ENCODE measurements at regions of chr16 and their contacts with region 1.

Region 1: DNA sequence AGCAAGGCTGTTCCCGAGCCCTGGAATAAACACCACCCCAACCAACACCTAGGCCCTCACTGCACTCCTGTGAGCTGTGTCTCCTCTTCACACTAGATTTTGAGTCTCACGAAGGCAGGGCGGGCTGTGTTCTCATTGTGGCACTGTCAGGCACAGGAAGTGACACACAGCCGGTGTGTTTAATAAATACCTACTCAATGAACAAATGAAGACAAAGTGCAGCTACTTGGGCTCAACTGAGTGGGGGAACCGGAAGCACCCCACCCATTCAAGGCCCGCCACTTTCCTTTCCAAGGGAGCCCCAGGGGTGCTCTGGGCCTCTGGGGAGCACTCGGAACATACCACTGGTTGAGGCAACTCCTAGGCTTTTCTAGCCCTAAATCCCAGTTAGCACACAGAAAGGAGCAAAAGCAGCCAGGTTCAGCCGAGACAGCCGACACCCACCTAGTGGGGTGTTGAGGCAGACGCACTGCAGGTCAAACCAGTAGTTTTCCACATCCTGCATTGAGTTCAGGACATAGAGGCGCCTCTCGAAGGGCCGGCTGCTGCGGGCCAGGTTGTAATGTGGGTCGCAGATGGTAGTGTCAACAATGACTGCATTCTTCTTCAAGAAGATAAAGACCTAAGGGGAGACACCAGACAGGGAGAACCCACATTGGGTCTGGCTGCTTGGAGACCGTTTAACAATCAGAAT is 57.7 kb downstream of the GTF3C1 start:
- DNase-seq: no peak
- ATAC-seq: no peak
- H3K4me3 ChIP-seq: no peak overlapping the region
- H3K27ac ChIP-seq: no peak overlapping the region
- H3K4me1 ChIP-seq: no peaks in the 10 kb centered on the region
- H3K27me3 ChIP-seq: no peaks in the 10 kb centered on the region
- CTCF ChIP-seq: no peak

Region 2: GRCh38 chr16:27164352-27164751 is 327.7 kb before region 1 on chr16:
- CTCF ChIA-PET with region 1: no interaction called
- POLR2A ChIA-PET with region 1: no interaction called
- in situ Hi-C with region 1: no loop called
- intact Hi-C with region 1: no loop called
- DNase-seq: no peak
- ATAC-seq: no peak
- H3K4me3 ChIP-seq: no peak overlapping the region
- H3K27ac ChIP-seq: no peak overlapping the region
- H3K4me1 ChIP-seq: no peaks in the 10 kb centered on the region
- H3K27me3 ChIP-seq: no peaks in the 10 kb centered on the region
- CTCF ChIP-seq: no peak

Region 3: DNA sequence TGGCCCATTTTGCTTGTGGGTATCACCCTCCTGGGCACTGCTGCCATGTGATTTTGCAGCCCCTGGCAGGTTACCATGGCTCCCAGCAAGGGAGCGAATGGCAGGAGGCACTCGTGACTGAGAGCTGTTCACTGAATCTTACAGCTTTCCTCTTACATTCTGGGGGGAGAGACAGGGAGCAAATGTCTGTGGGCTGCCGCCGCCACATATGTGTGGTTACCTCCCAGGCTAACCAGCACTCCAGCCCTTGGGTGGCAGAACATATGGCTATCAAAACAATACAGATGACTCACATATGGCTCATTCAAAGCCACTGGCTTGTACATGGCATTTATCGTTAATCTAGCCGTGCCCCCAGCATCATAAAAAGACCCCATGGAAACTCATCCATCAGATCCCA is 37.9 kb after region 1 on chr16:
- CTCF ChIA-PET with region 1: no interaction called
- POLR2A ChIA-PET with region 1: interaction called, 11 read pairs
- in situ Hi-C with region 1: no loop called
- intact Hi-C with region 1: no loop called
- DNase-seq: no peak
- ATAC-seq: no peak
- H3K4me3 ChIP-seq: no peak overlapping the region
- H3K27ac ChIP-seq: no peak overlapping the region
- H3K4me1 ChIP-seq: no peaks in the 10 kb centered on the region
- H3K27me3 ChIP-seq: no peaks in the 10 kb centered on the region
- CTCF ChIP-seq: no peak

Measured in Panc1 (cell line).